Mammary epithelial cell (primary cell): ENCODE measurements at regions of chr7 and their contacts with region 1.

Region 1: GRCh38 chr7:40763318-40764287 is 628.8 kb downstream of the SUGCT start:
- DNase-seq: no peak
- H3K4me3 ChIP-seq: no peak overlapping the region
- H3K27ac ChIP-seq: no peak overlapping the region
- H3K4me1 ChIP-seq: peaks cover 7% of the 10 kb centered on the region
- H3K27me3 ChIP-seq: no peaks in the 10 kb centered on the region
- CTCF ChIP-seq: peak; percentile 30 to 51

Region 2: DNA sequence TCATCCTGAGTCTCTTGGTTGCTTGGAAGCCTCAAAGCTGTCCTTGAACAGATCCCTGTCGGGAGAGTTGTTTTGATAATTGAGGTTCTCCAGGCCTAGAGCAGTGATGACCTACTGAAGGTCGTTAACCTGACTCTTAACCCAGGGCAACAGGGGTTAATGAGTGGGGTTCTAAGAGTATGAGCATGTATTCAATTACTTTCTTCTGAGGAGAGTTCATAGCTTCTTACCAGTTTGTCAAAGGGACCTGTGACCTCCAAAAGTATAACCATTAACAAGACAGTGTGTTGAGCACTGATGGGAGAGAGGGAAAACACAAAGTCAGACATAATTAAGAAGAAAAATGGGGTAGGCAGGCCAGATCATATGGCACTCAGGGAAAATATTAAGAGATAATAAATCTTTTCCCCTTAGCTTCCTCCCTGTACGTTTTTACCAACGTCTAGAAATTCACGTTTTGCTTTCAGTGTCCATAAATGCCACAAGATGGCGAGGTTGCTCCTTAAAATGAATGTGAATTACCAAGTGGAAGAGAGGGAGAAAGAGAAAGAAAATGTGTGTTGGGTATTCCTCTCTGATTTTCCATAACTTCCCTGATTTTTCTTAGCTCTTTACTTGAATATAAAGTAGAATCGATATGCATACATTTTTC is 531.2 kb before region 1 on chr7:
- CTCF ChIA-PET with region 1: no interaction called
- dilution Hi-C with region 1: no loop called
- in situ Hi-C with region 1: no loop called
- intact Hi-C with region 1: loop called (anchors 1 kb)
- DNase-seq: peak; percentile 55
- H3K4me3 ChIP-seq: no peak overlapping the region
- H3K27ac ChIP-seq: no peak overlapping the region
- H3K4me1 ChIP-seq: no peaks in the 10 kb centered on the region
- H3K27me3 ChIP-seq: no peaks in the 10 kb centered on the region
- CTCF ChIP-seq: peak; percentile 63 to 74

Region 3: DNA sequence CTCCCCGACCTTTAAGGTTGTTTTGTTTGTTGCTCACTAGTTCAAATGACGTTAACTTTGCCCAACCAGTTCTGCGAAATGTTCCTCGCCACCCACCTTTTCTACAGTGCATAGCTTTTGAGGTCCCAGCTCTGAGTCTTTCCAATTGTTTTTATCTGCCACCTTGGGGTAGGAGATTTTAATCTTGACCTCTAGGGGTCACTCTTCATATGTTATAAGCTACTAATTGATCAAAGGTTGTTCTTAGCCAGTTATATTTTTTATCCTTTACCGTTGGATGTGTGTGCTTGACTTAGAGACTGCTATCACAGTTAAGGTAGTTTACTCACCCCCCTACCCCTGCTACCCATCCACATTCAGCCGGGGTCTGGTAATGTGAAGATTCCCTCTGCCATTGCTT is 256.4 kb before region 1 on chr7:
- CTCF ChIA-PET with region 1: no interaction called
- dilution Hi-C with region 1: no loop called
- in situ Hi-C with region 1: no loop called
- intact Hi-C with region 1: loop called (anchors 10 kb)
- DNase-seq: peak; percentile 17
- H3K4me3 ChIP-seq: no peak overlapping the region
- H3K27ac ChIP-seq: no peak overlapping the region
- H3K4me1 ChIP-seq: peaks cover 4% of the 10 kb centered on the region
- H3K27me3 ChIP-seq: no peaks in the 10 kb centered on the region
- CTCF ChIP-seq: peak; percentile 26 to 43

Region 4: GRCh38 chr7:40700643-40701421 is 62.8 kb before region 1 on chr7:
- CTCF ChIA-PET with region 1: no interaction called
- dilution Hi-C with region 1: loop called (anchors 5 kb)
- in situ Hi-C with region 1: no loop called
- intact Hi-C with region 1: no loop called
- DNase-seq: peak; percentile 54
- H3K4me3 ChIP-seq: no peak overlapping the region
- H3K27ac ChIP-seq: peak overlapping the region; percentile 18
- H3K4me1 ChIP-seq: peaks cover 38% of the 10 kb centered on the region
- H3K27me3 ChIP-seq: no peaks in the 10 kb centered on the region
- CTCF ChIP-seq: peak; percentile 15 to 28

Region 5: DNA sequence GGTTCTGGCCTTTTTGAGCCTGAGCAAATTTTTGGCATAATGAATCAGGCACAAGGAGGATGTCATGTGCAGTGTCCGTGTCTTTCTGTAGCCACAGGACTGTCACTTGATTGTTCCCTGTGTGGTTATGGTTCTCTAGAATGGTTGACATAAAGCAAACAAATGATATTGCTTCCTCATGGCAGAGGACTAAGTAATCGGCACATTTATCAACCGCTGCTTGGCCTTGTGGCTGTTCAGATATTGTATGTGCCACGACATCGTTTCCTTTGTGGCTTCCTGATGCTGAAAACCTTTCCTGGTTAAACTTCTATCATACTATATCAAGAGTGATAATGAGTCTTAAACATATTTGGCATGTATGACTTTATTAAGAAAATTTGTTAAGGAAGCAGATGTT is 30.0 kb before region 1 on chr7:
- CTCF ChIA-PET with region 1: no interaction called
- dilution Hi-C with region 1: loop called (anchors 5 kb)
- in situ Hi-C with region 1: no loop called
- intact Hi-C with region 1: no loop called
- DNase-seq: no peak
- H3K4me3 ChIP-seq: no peak overlapping the region
- H3K27ac ChIP-seq: no peak overlapping the region
- H3K4me1 ChIP-seq: no peaks in the 10 kb centered on the region
- H3K27me3 ChIP-seq: no peaks in the 10 kb centered on the region
- CTCF ChIP-seq: no peak

Region 6: GRCh38 chr7:40850017-40850416 is 86.4 kb after region 1 on chr7:
- CTCF ChIA-PET with region 1: no interaction called
- dilution Hi-C with region 1: no loop called
- in situ Hi-C with region 1: no loop called
- intact Hi-C with region 1: no loop called
- DNase-seq: no peak
- H3K4me3 ChIP-seq: no peak overlapping the region
- H3K27ac ChIP-seq: no peak overlapping the region
- H3K4me1 ChIP-seq: peaks cover 10% of the 10 kb centered on the region
- H3K27me3 ChIP-seq: no peaks in the 10 kb centered on the region
- CTCF ChIP-seq: no peak

Region 7: GRCh38 chr7:40978047-40978446 is 214.4 kb after region 1 on chr7:
- CTCF ChIA-PET with region 1: no interaction called
- dilution Hi-C with region 1: no loop called
- in situ Hi-C with region 1: no loop called
- intact Hi-C with region 1: no loop called
- DNase-seq: no peak
- H3K4me3 ChIP-seq: no peak overlapping the region
- H3K27ac ChIP-seq: no peak overlapping the region
- H3K4me1 ChIP-seq: no peaks in the 10 kb centered on the region
- H3K27me3 ChIP-seq: no peaks in the 10 kb centered on the region
- CTCF ChIP-seq: no peak